ENCODE measurements at regions of chr16 and their contacts with region 1.

Region 1: DNA sequence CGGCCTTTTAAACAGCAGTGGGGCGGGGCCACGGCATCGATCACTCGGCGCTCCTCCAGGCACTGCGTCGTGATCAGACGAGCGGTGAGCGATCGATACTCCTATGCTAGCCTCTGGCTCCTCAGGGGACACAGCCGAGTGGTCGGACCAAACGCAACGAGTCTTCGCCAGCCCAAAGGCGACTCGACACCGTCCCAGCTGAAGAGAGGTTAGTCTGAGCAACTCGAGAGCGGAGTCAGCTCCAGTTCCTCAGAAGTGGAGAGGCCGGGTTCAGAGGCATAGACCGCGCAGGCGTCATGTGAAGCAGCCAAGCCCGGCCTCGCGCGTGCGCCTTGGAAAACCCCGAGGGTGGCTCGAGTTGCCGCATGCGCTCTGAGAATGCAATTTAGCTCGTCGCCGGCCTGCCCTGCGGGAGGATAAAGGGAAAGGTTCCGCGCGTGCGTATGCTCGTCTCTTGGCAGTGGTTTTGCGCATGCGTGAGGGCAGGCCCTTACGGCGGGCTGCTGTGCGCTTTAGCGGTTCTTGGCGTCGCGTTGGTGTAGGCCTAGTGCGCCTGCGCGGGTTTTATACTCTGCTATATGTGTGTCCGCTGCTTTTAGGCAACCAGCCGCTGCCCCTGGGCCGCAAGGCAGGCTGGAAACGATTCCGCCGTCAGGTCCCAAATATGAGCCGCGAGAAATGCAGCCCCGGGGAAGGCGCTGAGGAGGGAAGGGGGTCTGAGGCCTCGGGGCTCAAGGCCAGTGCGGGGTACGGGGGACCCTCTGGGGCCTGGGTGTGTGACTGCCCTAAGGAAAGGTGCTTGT is at the start of gene KDM8:
- DNase-seq: peak; percentile 99 to 100 (median 100)
- ATAC-seq: peak; percentile 85
- H3K4me3 ChIP-seq: peak within 1 kb of the TSS; percentile 83 to 93
- H3K4me3 Mint-ChIP-seq: peak within 1 kb of the TSS; percentile 96
- H3K27ac ChIP-seq: peak within 1 kb of the TSS; percentile 83 to 97
- H3K27ac Mint-ChIP-seq: peak within 1 kb of the TSS; percentile 99
- H3K4me1 ChIP-seq: peaks cover 54% of the 10 kb centered on the region
- H3K4me1 Mint-ChIP-seq: peaks cover 61% of the 10 kb centered on the region
- H3K27me3 ChIP-seq: no peaks in the 10 kb centered on the region
- H3K27me3 Mint-ChIP-seq: no peaks in the 10 kb centered on the region
- CTCF ChIP-seq: no peak
- total RNA-seq, gene KDM8: 17.6 to 22.6 TPM

Region 2: GRCh38 chr16:27154705-27155521 is 48.7 kb before region 1 on chr16:
- CTCF ChIA-PET with region 1: no interaction called
- POLR2A ChIA-PET with region 1: interaction called, 3 read pairs
- intact Hi-C with region 1: loop called in 1 of 2 experiments (anchors 2 kb)
- DNase-seq: peak; percentile 39 to 83 (median 71)
- ATAC-seq: peak; percentile 94
- H3K4me3 ChIP-seq: no peak overlapping the region
- H3K4me3 Mint-ChIP-seq: no peak overlapping the region
- H3K27ac ChIP-seq: no peak overlapping the region
- H3K27ac Mint-ChIP-seq: no peak overlapping the region
- H3K4me1 ChIP-seq: peaks cover 9% of the 10 kb centered on the region
- H3K4me1 Mint-ChIP-seq: peaks cover 8% of the 10 kb centered on the region
- H3K27me3 ChIP-seq: no peaks in the 10 kb centered on the region
- H3K27me3 Mint-ChIP-seq: no peaks in the 10 kb centered on the region
- CTCF ChIP-seq: peak; percentile 99

Measured in CD8-positive, alpha-beta T cell (primary cell).